ENCODE measurements at regions of chr10 and their contacts with region 1.

Region 1: GRCh38 chr10:3043512-3044368 is 23.6 kb upstream of the PFKP start:
- DNase-seq: peak; percentile 57
- ATAC-seq: peak; percentile 57
- H3K4me3 Mint-ChIP-seq: no peak overlapping the region
- H3K27ac Mint-ChIP-seq: no peak overlapping the region
- H3K4me1 Mint-ChIP-seq: no peaks in the 10 kb centered on the region
- H3K27me3 Mint-ChIP-seq: no peaks in the 10 kb centered on the region

Region 2: DNA sequence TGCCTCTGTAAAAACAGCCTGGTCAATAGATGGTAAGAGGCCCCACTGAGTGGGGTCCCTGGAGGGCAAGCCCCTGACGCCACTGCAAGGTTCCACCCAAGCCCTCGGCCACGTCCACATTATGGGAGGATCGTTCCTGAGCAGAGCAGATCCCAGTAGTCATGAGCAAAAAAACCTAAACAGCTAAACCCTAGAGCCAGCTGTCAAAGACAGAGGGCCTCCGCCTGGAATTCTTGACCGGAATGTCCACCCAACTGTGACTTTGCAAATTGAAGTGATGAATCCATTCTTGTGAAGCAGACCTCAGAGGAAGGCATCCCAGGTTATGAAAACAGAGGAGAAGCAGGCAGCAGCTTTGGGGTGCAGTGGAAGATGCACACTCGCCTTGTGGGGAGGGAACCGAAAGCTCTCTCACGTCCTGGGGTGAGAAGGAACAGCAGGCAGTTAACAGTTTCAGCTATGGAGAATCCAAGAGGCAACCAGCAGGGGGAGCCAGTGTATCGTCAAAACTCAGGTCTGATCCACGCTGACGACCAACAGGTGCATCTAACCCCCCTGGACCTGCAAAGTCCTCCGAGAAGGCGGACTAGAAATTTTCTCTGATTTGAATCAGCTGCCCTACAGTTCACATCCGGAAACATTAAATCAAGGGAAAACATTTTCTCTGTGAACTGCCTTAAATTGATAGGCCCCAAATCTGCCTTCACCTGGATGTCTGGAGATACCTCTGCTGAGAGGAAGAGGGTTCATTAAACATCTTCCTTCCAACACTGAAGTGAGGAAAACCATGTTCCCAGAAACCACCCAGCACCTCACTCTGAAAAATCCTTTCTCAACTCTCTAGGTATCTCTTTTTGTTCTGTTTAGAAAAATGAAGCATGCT is 115.5 kb before region 1 on chr10:
- CTCF ChIA-PET with region 1: interaction called, 17 read pairs
- POLR2A ChIA-PET with region 1: no interaction called
- DNase-seq: peak; percentile 80
- ATAC-seq: peak; percentile 79
- H3K4me3 Mint-ChIP-seq: no peak overlapping the region
- H3K27ac Mint-ChIP-seq: no peak overlapping the region
- H3K4me1 Mint-ChIP-seq: peaks cover 12% of the 10 kb centered on the region
- H3K27me3 Mint-ChIP-seq: peaks cover 3% of the 10 kb centered on the region

Region 3: DNA sequence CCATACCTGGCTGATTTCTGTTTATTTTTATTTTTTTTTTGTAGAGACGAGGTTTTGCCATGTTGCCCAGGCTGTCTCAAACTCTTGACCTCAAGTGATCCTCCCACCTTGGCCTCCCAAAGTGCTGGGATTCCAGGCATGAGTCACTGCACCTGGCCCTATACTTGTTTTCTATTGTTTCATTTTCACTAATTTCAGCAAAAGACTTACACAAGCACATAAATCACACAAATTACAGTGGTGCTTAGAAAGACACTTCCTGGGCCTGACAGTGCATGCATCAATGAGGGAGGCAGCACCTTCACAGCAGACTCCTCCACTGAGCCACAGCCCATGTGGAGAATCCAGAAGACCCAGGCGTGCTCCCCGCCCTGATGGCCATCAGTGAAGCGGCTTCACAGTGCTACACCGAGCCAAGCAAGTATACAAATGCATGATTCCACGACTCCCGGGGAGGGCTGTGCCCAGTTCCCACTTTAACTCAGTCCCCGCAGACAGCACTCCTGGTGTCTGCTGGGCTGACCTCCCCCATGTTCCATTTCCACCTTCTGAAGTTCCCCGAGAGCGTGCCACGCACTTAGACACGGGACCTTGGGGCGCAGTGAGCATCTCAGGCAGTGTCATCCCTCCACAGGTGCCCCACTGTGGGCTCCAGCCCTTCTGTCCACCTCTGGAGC is 108.3 kb after region 1 on chr10:
- CTCF ChIA-PET with region 1: no interaction called
- POLR2A ChIA-PET with region 1: no interaction called
- DNase-seq: no peak
- ATAC-seq: no peak
- H3K4me3 Mint-ChIP-seq: no peak overlapping the region
- H3K27ac Mint-ChIP-seq: peak overlapping the region; percentile 18
- H3K4me1 Mint-ChIP-seq: no peaks in the 10 kb centered on the region
- H3K27me3 Mint-ChIP-seq: no peaks in the 10 kb centered on the region

Measured in activated CD8-positive, alpha-beta T cell treated with anti-CD3 and anti-CD28 coated beads, Interleukin-2, amount 10 ng/mL, durations not matched to agents 7 days and 5 days (primary cell).